ENCODE measurements at regions of chr11 and their contacts with region 1.

Region 1: GRCh38 chr11:59534676-59535075 is 23.3 kb downstream of the OR4D9 start:
- DNase-seq: no peak
- ATAC-seq: no peak
- H3K4me3 ChIP-seq: no peak overlapping the region
- H3K27ac ChIP-seq: no peak overlapping the region
- H3K4me1 ChIP-seq: peaks cover 0 to 8% of the 10 kb centered on the region in 2 donors
- H3K27me3 ChIP-seq: no peaks in the 10 kb centered on the region
- CTCF ChIP-seq: no peak
- POLR2A ChIP-seq: no peak

Region 2: GRCh38 chr11:59365232-59366020 is 169.2 kb before region 1 on chr11:
- in situ Hi-C with region 1: no loop called
- intact Hi-C with region 1: no loop called
- DNase-seq: no peak
- ATAC-seq: no peak
- H3K4me3 ChIP-seq: no peak overlapping the region
- H3K27ac ChIP-seq: no peak overlapping the region
- H3K4me1 ChIP-seq: no peaks in the 10 kb centered on the region
- H3K27me3 ChIP-seq: no peaks in the 10 kb centered on the region
- CTCF ChIP-seq: no peak
- POLR2A ChIP-seq: no peak

Region 3: GRCh38 chr11:59560702-59561469 is 26.2 kb after region 1 on chr11:
- in situ Hi-C with region 1: no loop called
- intact Hi-C with region 1: no loop called
- DNase-seq: peak; percentile 88
- ATAC-seq: peak; percentile 88 to 90
- H3K4me3 ChIP-seq: peak overlapping the region; percentile 83 to 91 (median 84)
- H3K27ac ChIP-seq: peak overlapping the region; percentile 85 to 88 (median 86)
- H3K4me1 ChIP-seq: peaks cover 6 to 11% of the 10 kb centered on the region in 2 donors
- H3K27me3 ChIP-seq: no peaks in the 10 kb centered on the region
- CTCF ChIP-seq: no peak
- POLR2A ChIP-seq: peak; percentile 39 to 46

Region 4: DNA sequence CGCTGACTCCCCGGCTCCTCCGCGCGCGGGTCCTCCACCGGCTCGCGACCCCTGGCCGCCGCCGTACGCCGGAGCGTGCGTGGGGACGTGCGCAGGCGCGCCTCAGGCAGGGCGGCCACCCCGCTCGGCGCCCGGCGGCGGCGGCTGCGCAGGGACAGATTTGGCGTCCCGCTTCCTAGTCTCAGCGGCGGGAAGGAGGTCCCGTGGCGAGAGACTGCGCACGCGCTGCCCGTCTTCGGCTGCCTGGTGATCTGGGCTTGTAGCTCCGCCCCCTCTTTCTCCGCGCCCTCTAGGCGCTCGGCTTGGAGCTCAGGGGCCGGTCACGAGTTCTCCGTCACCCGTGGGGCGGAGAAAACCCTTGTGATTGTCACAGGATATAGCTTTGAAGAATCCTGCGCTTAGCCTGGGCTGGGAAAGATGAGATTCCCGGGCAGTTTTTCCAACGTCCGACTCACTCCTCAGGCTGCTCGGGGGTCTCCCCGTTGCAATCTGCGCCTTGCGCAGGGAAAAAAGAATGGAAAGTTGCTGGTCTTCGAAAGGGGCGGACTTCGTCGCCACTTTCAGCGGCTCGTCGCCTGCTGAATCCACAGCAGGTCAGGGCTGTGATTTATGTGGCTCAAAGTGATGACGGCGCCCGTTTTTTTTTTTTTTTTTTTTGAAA is 134.4 kb after region 1 on chr11 and contains the start of gene PATL1:
- in situ Hi-C with region 1: loop called in 3 of 4 experiments (anchors 5 to 10 kb)
- intact Hi-C with region 1: loop called (anchors 2 kb)
- DNase-seq: peak; percentile 100
- ATAC-seq: peak; percentile 93 to 97
- H3K4me3 ChIP-seq: peak within 1 kb of the TSS; percentile 90 to 97 (median 96)
- H3K27ac ChIP-seq: peak within 1 kb of the TSS; percentile 95 to 99 (median 97)
- H3K4me1 ChIP-seq: peaks cover 19 to 26% of the 10 kb centered on the region in 2 donors
- H3K27me3 ChIP-seq: no peaks in the 10 kb centered on the region
- CTCF ChIP-seq: peak in 1 of 5 experiments; percentile 38
- POLR2A ChIP-seq: peak; percentile 90 to 94
- total RNA-seq, gene PATL1: 19.0 to 29.9 (median 26.2) TPM

Region 5: DNA sequence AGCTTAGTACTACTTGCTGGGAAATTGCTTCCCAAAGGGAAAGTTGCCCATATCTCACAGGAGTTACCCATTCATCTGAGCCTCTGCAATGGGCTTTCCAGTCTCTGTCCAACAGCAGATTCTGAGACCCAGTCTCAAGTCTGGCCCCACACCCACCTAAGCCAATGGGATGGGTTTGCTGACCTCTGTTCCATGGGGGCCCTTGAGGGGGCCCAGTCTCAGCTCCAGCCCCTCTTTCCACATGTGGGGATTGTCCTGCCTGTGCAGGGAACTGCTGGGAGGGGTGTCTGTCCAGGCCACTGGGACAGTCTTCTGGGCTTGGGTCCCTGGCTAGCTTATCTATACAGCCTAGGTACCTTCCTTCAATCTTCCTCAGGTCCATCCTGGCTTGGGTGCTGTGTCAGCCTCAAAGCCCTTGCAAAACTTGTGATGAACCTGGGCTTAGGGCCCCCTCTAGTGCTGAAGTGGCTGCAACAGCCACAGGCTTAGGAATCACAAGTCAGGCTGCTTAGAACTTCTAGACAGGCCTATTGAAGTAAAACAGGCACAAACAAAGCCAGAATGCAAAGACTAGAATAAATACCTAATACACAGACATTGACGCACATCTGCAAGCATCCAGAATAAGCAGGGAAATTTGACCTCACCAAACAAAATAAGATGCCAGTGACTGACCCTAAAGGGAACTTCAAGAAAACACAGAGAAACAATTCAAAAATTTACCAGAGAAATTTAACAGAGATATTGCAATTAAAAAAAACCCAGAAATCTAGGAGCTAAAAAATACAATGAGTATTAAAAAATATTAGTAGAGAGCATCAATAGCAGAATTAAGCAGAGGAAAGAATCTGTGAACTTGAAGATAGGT is 145.8 kb after region 1 on chr11:
- in situ Hi-C with region 1: loop called in 2 of 4 experiments (anchors 5 to 10 kb)
- intact Hi-C with region 1: loop called (anchors 1 kb)
- DNase-seq: peak; percentile 44 to 60
- ATAC-seq: peak; percentile 96 to 98
- H3K4me3 ChIP-seq: no peak overlapping the region
- H3K27ac ChIP-seq: no peak overlapping the region
- H3K4me1 ChIP-seq: no peaks in the 10 kb centered on the region
- H3K27me3 ChIP-seq: peaks cover 0 to 7% (median 0%) of the 10 kb centered on the region in 3 donors
- CTCF ChIP-seq: peak; percentile 40 to 71 (median 63)
- POLR2A ChIP-seq: no peak

Region 6: GRCh38 chr11:59802639-59803176 is 268.0 kb after region 1 on chr11:
- in situ Hi-C with region 1: loop called (anchors 5 to 25 kb)
- intact Hi-C with region 1: loop called (anchors 5 kb)
- DNase-seq: peak in 1 of 2 donors; percentile 18
- ATAC-seq: peak; percentile 84 to 85
- H3K4me3 ChIP-seq: no peak overlapping the region
- H3K27ac ChIP-seq: peak overlapping the region; percentile 36 to 78 (median 64)
- H3K4me1 ChIP-seq: peaks cover 6 to 9% of the 10 kb centered on the region in 2 donors
- H3K27me3 ChIP-seq: no peaks in the 10 kb centered on the region
- CTCF ChIP-seq: peak; percentile 59 to 83 (median 64)
- POLR2A ChIP-seq: no peak